Caco-2 (cell line): ENCODE measurements at regions of chr10 and their contacts with region 1.

Region 1: GRCh38 chr10:511101-511848 is 178.2 kb downstream of the DIP2C start:
- DNase-seq: peak; percentile 93 to 97
- H3K4me3 ChIP-seq: no peak overlapping the region
- H3K4me3 Mint-ChIP-seq: no peak overlapping the region
- H3K27ac Mint-ChIP-seq: peak overlapping the region; percentile 76
- H3K4me1 ChIP-seq: peaks cover 9% of the 10 kb centered on the region
- H3K4me1 Mint-ChIP-seq: peaks cover 19% of the 10 kb centered on the region
- H3K27me3 ChIP-seq: no peaks in the 10 kb centered on the region
- H3K27me3 Mint-ChIP-seq: no peaks in the 10 kb centered on the region
- CTCF ChIP-seq: peak; percentile 99

Region 2: GRCh38 chr10:546921-547391 is 35.7 kb after region 1 on chr10:
- CTCF ChIA-PET with region 1: interaction called, 9 read pairs
- POLR2A ChIA-PET with region 1: no interaction called
- intact Hi-C with region 1: loop called (anchors 2 kb)
- DNase-seq: peak; percentile 91 to 95
- H3K4me3 ChIP-seq: peak overlapping the region; percentile 0; the same call in 1 of the 2 replicates
- H3K4me3 Mint-ChIP-seq: peak overlapping the region; percentile 63
- H3K27ac Mint-ChIP-seq: peak overlapping the region; percentile 92
- H3K4me1 ChIP-seq: peaks cover 45% of the 10 kb centered on the region
- H3K4me1 Mint-ChIP-seq: peaks cover 35% of the 10 kb centered on the region
- H3K27me3 ChIP-seq: no peaks in the 10 kb centered on the region
- H3K27me3 Mint-ChIP-seq: no peaks in the 10 kb centered on the region
- CTCF ChIP-seq: no peak

Region 3: DNA sequence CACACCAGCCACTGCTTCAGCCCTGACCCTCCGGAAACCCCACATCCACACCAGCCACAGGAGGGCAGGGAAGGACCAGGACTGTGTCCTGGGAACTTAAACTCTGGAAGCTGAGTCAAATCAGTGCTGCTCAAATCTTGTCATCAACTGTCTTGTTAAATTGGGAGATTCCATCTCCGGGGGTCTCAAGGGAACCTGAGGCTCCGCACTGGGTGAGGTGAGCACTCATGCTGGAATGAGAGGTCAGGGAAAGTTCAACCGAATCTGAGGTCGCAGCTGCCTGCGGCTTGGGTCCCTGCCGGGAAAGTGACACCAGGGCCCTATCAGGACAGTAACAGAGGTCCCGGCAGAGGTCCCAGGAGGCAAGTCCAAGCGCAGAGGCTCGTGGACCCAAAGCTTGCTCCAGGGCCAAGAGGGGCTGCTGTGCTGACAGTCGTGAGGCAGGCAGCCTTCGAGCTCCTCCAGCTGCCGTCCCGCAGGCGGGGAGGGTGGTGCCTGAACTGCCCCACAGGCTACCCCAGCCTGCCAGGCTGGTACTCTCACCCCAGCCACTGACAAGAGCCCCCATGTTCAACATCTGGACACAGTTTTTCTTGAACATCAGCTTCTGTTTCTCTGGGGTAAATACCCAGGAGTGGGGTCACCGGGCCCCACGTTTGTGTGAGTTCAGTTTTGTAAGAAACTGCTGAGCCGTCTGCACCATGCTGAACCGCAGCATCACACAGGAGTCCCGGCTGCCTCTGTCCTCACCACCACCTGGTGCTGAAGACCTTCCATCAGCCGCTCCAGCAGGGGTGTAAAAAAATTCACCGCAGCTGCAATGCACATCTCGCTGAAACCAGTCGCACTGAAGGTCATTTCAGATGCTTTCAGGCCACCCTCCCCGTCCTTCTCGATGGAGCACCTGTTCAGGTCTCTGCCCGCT is 77.2 kb after region 1 on chr10:
- CTCF ChIA-PET with region 1: no interaction called
- POLR2A ChIA-PET with region 1: no interaction called
- intact Hi-C with region 1: loop called (anchors 5 kb)
- DNase-seq: peak in 1 of 2 experiments; percentile 49
- H3K4me3 ChIP-seq: no peak overlapping the region
- H3K4me3 Mint-ChIP-seq: no peak overlapping the region
- H3K27ac Mint-ChIP-seq: no peak overlapping the region
- H3K4me1 ChIP-seq: no peaks in the 10 kb centered on the region
- H3K4me1 Mint-ChIP-seq: peaks cover 7% of the 10 kb centered on the region
- H3K27me3 ChIP-seq: no peaks in the 10 kb centered on the region
- H3K27me3 Mint-ChIP-seq: no peaks in the 10 kb centered on the region
- CTCF ChIP-seq: peak; percentile 21 to 61

Region 4: GRCh38 chr10:649798-650440 is 138.6 kb after region 1 on chr10:
- CTCF ChIA-PET with region 1: no interaction called
- POLR2A ChIA-PET with region 1: no interaction called
- intact Hi-C with region 1: loop called (anchors 1 kb)
- DNase-seq: peak; percentile 87 to 89
- H3K4me3 ChIP-seq: peak overlapping the region; percentile 53
- H3K4me3 Mint-ChIP-seq: peak overlapping the region; percentile 66
- H3K27ac Mint-ChIP-seq: no peak overlapping the region
- H3K4me1 ChIP-seq: peaks cover 25% of the 10 kb centered on the region
- H3K4me1 Mint-ChIP-seq: peaks cover 17% of the 10 kb centered on the region
- H3K27me3 ChIP-seq: no peaks in the 10 kb centered on the region
- H3K27me3 Mint-ChIP-seq: no peaks in the 10 kb centered on the region
- CTCF ChIP-seq: no peak

Region 5: DNA sequence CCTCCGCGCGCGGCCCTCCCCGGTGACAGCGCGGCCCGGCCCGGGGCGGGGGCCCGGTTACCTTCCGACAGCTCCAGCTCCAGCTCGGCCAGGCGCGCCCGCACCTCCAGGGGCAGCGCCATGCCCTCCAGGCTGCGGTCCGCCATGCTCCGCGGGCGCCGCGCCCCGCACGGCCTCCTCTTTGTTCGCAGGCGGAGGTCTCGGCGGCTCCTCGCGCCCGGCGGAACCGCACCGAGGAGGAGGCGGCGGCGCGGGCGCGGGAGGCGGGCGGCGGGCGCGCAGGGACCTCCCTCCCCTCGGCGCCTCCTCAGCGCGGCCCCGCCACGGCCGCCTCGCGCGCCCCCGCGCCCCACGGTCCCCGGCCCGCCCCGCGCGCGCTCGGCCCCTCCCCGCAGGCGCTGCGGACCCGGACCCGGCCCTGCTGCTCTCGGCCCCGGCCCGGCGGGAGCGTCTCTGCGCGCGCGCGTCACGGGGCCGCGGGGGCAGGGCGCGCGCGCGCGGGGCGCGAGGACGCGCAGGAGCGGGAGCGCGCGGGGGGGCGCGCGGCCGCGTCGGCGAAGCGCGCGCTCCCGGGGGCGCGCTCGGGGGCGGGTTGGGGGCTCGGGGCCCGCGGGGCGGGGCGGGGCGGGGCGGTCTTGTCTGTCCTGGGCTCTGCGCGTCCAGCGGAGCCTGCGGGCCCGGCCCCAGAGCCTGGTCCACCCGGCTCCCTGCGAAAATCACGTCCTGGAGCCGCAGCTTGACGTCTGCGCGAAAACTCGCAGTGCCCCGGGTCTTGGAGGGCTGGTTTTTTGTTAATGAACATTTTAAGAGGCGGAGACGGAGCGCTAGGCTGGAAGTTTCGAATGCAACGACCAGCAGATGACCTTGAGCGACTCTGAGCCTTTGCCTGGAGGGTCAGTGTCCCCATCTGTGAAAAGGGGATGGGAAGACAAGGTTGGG is 178.4 kb after region 1 on chr10 and contains the start of gene DIP2C:
- CTCF ChIA-PET with region 1: no interaction called
- POLR2A ChIA-PET with region 1: no interaction called
- intact Hi-C with region 1: loop called (anchors 1 kb)
- DNase-seq: peak; percentile 75 to 90
- H3K4me3 ChIP-seq: peak within 1 kb of the TSS; percentile 58
- H3K4me3 Mint-ChIP-seq: peak within 1 kb of the TSS; percentile 81
- H3K27ac Mint-ChIP-seq: peak within 1 kb of the TSS; percentile 44
- H3K4me1 ChIP-seq: peaks cover 17% of the 10 kb centered on the region
- H3K4me1 Mint-ChIP-seq: peaks cover 20% of the 10 kb centered on the region
- H3K27me3 ChIP-seq: no peaks in the 10 kb centered on the region
- H3K27me3 Mint-ChIP-seq: no peaks in the 10 kb centered on the region
- CTCF ChIP-seq: no peak
- total RNA-seq, gene DIP2C: 11.2 and 11.4 TPM in 2 replicates

Region 6: GRCh38 chr10:784403-785088 is 273.3 kb after region 1 on chr10:
- CTCF ChIA-PET with region 1: interaction called, 26 read pairs
- POLR2A ChIA-PET with region 1: no interaction called
- intact Hi-C with region 1: loop called (anchors 1 kb)
- DNase-seq: peak; percentile 56 to 60
- H3K4me3 ChIP-seq: peak overlapping the region; percentile 36
- H3K4me3 Mint-ChIP-seq: peak overlapping the region; percentile 54
- H3K27ac Mint-ChIP-seq: no peak overlapping the region
- H3K4me1 ChIP-seq: peaks cover 9% of the 10 kb centered on the region
- H3K4me1 Mint-ChIP-seq: no peaks in the 10 kb centered on the region
- H3K27me3 ChIP-seq: no peaks in the 10 kb centered on the region
- H3K27me3 Mint-ChIP-seq: no peaks in the 10 kb centered on the region
- CTCF ChIP-seq: peak in 1 of 2 experiments; percentile 28

Region 7: DNA sequence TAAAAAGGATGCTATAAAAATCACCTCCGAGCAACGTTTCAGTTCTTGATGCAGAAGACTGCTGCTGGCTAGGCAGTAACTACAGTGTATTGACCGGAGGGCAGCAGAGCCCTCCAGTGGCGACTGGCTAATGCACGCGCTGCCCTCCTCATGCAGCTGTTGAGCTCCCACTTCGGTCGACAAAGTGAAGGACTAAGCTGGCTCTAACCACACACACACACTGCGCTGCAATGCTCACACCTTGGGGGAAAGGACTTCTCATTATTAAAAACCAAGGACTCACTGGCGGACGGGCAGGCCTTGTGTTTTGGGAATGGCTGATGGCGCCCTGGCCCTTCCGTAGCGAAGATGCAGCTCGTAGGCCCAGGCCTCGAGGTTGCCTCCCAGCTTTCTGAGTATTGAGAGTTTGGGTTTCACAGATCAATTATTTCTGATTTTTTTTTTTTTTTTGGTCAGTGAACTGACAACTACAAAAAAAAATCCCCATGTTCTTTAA is 299.1 kb after region 1 on chr10:
- CTCF ChIA-PET with region 1: interaction called, 6 read pairs
- POLR2A ChIA-PET with region 1: no interaction called
- intact Hi-C with region 1: loop called (anchors 1 kb)
- DNase-seq: peak; percentile 48 to 59
- H3K4me3 ChIP-seq: no peak overlapping the region
- H3K4me3 Mint-ChIP-seq: no peak overlapping the region
- H3K27ac Mint-ChIP-seq: no peak overlapping the region
- H3K4me1 ChIP-seq: no peaks in the 10 kb centered on the region
- H3K4me1 Mint-ChIP-seq: no peaks in the 10 kb centered on the region
- H3K27me3 ChIP-seq: no peaks in the 10 kb centered on the region
- H3K27me3 Mint-ChIP-seq: no peaks in the 10 kb centered on the region
- CTCF ChIP-seq: peak; percentile 39 to 75